ENCODE measurements at regions of chr10 and their contacts with region 1.

Region 1: GRCh38 chr10:13707156-13707881 is 120.6 kb downstream of the PRPF18 start:
- DNase-seq: peak; percentile 36 to 89
- H3K4me3 ChIP-seq: peak overlapping the region; percentile 56 to 58
- H3K27ac ChIP-seq: peak overlapping the region; percentile 40 to 64
- H3K4me1 ChIP-seq: peaks cover 5 to 15% of the 10 kb centered on the region in 2 donors
- H3K27me3 ChIP-seq: no peaks in the 10 kb centered on the region
- CTCF ChIP-seq: no peak

Region 2: GRCh38 chr10:13348216-13349017 is 358.9 kb before region 1 on chr10 and contains the start of gene SEPHS1:
- intact Hi-C with region 1: no loop called
- DNase-seq: peak in 1 of 2 donors; percentile 85
- H3K4me3 ChIP-seq: peak within 1 kb of the TSS; percentile 90 to 93
- H3K27ac ChIP-seq: peak within 1 kb of the TSS; percentile 93 to 96
- H3K4me1 ChIP-seq: peaks cover 0 to 13% of the 10 kb centered on the region in 2 donors
- H3K27me3 ChIP-seq: no peaks in the 10 kb centered on the region
- CTCF ChIP-seq: peak in 2 of 3 experiments; percentile 5 to 10
- total RNA-seq, gene SEPHS1: 20.3 TPM

Region 3: DNA sequence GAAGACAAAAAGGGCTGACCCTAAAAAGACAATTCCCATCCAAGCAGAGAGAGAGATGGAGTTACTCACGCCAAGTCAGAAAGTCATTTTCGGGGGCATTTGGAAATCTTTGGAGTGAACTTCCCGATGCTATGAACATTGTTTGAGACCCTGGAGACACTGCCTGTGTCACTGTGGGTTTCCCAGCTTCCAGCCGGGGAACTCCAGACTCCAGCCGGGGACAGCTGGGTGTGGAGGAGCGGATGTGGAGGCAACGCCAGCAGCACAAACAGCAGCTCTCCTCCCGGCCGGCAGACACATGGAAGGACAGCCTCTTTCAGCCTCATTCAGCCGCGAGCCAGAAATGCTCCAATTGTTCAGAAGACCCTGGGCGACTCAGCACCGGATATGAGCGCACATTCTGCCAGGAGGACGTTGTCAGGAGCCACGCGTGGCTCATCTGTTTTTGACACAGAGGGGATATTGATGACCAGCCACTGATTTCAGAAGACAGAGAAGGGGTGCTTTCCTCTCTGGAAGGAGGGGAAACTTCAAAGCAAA is 23.0 kb before region 1 on chr10:
- intact Hi-C with region 1: loop called (anchors 1 kb)
- DNase-seq: peak in 1 of 2 donors; percentile 77
- H3K4me3 ChIP-seq: peak overlapping the region in 1 of 2 donors; percentile 27
- H3K27ac ChIP-seq: peak overlapping the region; percentile 53 to 61
- H3K4me1 ChIP-seq: peaks cover 0 to 37% of the 10 kb centered on the region in 2 donors
- H3K27me3 ChIP-seq: no peaks in the 10 kb centered on the region
- CTCF ChIP-seq: no peak